ENCODE measurements at regions of chr17 and their contacts with region 1.

Region 1: DNA sequence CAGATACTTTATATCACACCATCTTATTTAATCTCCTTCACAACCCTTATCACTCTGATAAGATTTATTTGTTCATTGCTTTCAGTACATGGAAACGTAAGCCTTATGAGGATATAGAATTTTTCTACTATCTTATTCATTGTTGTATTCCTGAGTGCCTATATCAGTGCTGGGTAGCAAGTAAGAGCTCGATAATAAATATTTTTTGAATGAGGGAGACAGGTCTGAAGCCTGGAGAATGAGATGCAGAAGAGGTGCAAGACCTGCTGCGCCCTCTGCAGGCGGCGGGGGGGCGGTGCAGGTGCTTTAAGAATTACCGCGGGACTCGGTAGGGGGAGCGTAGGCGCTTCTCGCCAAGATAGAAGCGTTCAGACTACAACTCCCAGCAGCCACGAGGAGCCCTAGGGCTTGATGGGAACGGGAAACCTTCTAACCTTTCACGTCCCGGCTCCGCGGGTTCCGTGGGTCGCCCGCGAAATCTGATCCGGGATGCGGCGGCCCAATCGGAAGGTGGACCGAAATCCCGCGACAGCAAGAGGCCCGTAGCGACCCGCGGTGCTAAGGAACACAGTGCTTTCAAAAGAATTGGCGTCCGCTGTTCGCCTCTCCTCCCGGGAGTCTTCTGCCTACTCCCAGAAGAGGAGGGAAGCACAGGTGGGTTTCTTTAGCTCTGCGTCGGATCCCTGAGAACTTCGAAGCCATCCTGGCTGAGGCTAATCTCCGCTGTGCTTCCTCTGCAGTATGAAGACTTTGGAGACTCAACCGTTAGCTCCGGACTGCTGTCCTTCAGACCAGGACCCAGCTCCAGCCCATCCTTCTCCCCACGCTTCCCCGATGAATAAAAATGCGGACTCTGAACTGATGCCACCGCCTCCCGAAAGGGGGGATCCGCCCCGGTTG is at the start of gene WRAP53:
- DNase-seq: peak; percentile 97
- ATAC-seq: peak; percentile 79
- total RNA-seq, gene WRAP53: 6.4 to 9.7 TPM

Region 2: DNA sequence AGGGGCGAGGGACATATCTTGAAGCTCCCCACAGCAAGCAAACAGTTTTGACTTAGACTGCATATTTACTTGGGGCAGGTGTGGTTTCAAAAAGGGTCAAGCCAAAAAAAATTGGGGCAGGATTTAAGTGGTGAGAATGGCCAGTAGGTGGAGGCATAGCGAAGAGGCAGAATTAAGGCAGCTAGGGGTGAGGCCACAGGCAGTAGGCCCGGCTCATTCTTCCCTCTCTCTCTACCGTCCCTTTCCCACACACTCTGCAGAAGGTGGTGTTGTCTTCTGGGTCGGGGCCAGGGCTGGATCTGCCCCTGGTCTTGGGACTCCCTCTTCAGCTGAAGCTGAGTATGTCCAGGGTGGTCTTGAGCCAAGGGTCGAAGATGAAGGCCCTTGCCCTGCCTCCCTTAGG is 55.7 kb before region 1 on chr17:
- intact Hi-C with region 1: loop called in 1 of 2 experiments (anchors 10 kb)
- DNase-seq: peak in 1 of 2 donors; percentile 37
- ATAC-seq: peak; percentile 49

Measured in left colon (tissue), 2 donors.